ENCODE measurements at regions of chr11 and their contacts with region 1.

Region 1: DNA sequence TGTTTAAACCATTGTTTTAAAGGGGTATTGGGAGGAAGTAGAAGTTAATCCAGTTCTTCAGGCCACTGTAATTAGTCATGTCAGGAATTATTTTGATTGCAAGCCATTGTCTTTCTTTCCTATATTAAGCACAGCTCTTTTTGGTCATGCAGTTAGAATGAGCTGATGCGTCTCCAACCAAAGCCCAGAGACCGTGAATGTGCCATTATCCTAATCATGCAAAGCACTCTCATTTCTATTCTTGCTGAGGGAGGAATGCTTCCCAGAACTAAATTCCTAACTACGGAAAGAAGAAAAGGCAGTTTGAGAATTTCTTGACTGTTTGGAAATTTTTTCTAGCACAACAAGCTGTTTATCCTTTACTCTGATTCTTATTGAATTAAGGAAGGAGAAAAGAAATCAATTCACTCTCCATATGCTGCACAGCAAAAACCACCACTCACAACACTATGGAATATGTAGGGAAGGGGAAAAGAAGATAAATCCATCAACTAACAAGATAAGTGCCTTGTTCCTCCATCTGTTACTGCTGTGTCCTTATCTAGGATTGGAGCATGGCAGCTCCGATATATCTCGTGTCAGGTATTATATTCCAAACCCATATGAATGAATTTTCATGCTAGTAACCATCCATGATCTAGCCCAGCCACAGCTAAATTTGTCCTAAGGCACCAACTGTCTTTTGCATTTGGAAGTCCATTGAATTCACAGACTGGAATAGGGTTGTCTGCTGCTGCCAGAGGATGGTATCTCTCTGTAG is 70.8 kb downstream of the NTM start:
- DNase-seq: no peak
- H3K4me3 ChIP-seq: no peak overlapping the region
- H3K27ac ChIP-seq: no peak overlapping the region
- H3K4me1 ChIP-seq: no peaks in the 10 kb centered on the region
- H3K27me3 ChIP-seq: no peaks in the 10 kb centered on the region
- CTCF ChIP-seq: no peak

Region 2: DNA sequence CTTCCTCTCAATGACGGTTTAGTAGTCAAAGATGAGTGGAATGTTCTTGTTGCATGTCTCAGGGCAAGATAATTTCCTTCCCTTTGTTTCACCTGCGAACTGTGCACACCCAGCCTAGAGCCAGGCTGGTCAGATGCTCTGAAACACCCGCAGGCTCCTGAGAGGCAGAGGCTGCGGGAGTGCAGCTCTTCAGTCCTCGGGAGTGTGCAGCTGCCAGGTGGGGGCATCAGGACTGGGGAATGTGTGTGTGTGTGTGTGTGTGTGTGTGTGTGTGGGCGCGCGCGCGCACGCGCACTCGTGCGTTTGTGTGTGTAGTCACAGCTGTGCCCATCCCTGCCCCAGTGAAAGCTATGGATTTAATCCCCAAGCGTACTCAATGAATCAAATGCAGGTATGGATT is 207.0 kb before region 1 on chr11:
- CTCF ChIA-PET with region 1: interaction called, 12 read pairs
- dilution Hi-C with region 1: no loop called
- in situ Hi-C with region 1: no loop called
- intact Hi-C with region 1: no loop called
- DNase-seq: no peak
- H3K4me3 ChIP-seq: no peak overlapping the region
- H3K27ac ChIP-seq: no peak overlapping the region
- H3K4me1 ChIP-seq: no peaks in the 10 kb centered on the region
- H3K27me3 ChIP-seq: no peaks in the 10 kb centered on the region
- CTCF ChIP-seq: no peak

Region 3: DNA sequence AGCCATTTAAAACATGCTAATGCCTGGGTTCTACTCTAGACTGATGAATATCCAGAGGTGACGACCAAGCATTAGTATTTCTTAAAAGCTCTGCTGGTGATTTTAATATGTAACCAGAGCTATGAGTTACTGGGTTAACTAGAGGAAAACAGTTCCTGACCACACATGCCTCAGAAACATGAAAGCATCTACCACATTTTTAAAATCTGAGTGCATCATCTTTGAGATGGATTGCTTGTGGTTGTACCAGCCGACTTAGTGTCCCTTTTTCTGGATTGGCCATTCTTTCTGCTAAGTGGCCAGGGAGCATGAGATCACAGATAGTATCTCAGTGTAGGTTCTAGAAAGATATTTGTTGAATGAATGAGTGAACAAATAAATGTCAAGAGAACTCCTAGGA is 81.6 kb after region 1 on chr11:
- CTCF ChIA-PET with region 1: no interaction called
- dilution Hi-C with region 1: loop called (anchors 5 kb)
- in situ Hi-C with region 1: no loop called
- intact Hi-C with region 1: no loop called
- DNase-seq: no peak
- H3K4me3 ChIP-seq: no peak overlapping the region
- H3K27ac ChIP-seq: no peak overlapping the region
- H3K4me1 ChIP-seq: no peaks in the 10 kb centered on the region
- H3K27me3 ChIP-seq: peaks cover 3% of the 10 kb centered on the region
- CTCF ChIP-seq: no peak

Region 4: GRCh38 chr11:131668500-131669400 is 227.5 kb after region 1 on chr11:
- CTCF ChIA-PET with region 1: no interaction called
- dilution Hi-C with region 1: no loop called
- in situ Hi-C with region 1: no loop called
- intact Hi-C with region 1: no loop called
- DNase-seq: peak; percentile 20
- H3K4me3 ChIP-seq: no peak overlapping the region
- H3K27ac ChIP-seq: no peak overlapping the region
- H3K4me1 ChIP-seq: no peaks in the 10 kb centered on the region
- H3K27me3 ChIP-seq: no peaks in the 10 kb centered on the region
- CTCF ChIP-seq: peak; percentile 56 to 59

Measured in mammary epithelial cell (primary cell).